Ovary (tissue), 10 donors: ENCODE measurements at regions of chr10 and their contacts with region 1.

Region 1: GRCh38 chr10:86710987-86711512 is 42.7 kb downstream of the LDB3 start:
- DNase-seq: peak; percentile 89 to 94 (median 92)
- H3K4me3 ChIP-seq: peak overlapping the region; percentile 85
- H3K27ac ChIP-seq: peak overlapping the region; percentile 88 to 94
- H3K4me1 ChIP-seq: peaks cover 5% of the 10 kb centered on the region
- H3K27me3 ChIP-seq: no peaks in the 10 kb centered on the region
- CTCF ChIP-seq: peak; percentile 84 to 97 (median 95)
- EP300 ChIP-seq: no peak
- POLR2A ChIP-seq: peak; percentile 75

Region 2: GRCh38 chr10:86755740-86756510 is 44.9 kb after region 1 on chr10:
- intact Hi-C with region 1: loop called in 2 of 4 experiments (anchors 2 to 5 kb)
- DNase-seq: peak; percentile 71 to 97 (median 92)
- H3K4me3 ChIP-seq: peak overlapping the region; percentile 74
- H3K27ac ChIP-seq: peak overlapping the region; percentile 84 to 96
- H3K4me1 ChIP-seq: peaks cover 2% of the 10 kb centered on the region
- H3K27me3 ChIP-seq: no peaks in the 10 kb centered on the region
- CTCF ChIP-seq: peak in 2 of 3 donors; percentile 10 to 17
- EP300 ChIP-seq: no peak
- POLR2A ChIP-seq: peak; percentile 77

Region 3: GRCh38 chr10:86899670-86900276 is 188.7 kb after region 1 on chr10:
- intact Hi-C with region 1: loop called in 3 of 4 experiments (anchors 5 kb)
- DNase-seq: peak; percentile 45 to 79 (median 57)
- H3K4me3 ChIP-seq: no peak overlapping the region
- H3K27ac ChIP-seq: no peak overlapping the region
- H3K4me1 ChIP-seq: peaks cover 6% of the 10 kb centered on the region
- H3K27me3 ChIP-seq: no peaks in the 10 kb centered on the region
- CTCF ChIP-seq: peak; percentile 35 to 82 (median 81)
- EP300 ChIP-seq: no peak
- POLR2A ChIP-seq: no peak

Region 4: DNA sequence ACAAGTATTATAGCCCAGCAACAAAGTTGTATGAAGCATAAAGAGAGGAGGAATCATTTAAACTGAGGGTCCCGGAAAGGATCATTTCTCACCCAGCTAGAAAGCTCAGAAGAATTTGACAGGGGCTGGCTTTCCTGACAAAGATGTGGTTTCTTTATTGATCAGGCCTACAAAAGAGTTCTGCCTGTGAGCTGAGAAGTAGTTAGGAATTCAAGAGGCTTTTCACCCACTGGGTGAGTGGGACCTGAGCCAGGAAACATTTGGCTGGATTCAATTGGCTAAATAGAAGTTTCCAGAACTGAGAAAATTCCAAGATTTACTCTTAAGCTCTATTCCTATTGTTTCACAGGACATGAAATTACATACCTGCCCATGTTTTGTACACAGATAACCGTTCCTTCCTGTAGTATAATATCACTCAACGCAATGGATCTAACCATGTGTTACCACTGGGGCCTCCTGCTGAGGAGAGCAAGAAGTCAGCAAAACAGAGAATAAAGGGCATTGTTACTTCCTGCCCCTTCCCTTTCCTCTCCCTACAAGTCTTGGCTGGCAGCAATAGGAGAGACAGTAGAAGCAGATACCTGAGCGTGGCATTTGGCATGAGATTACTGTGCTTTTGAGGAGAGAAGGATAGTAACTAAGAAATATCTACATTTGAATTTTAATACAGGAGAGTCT is 894.7 kb after region 1 on chr10:
- intact Hi-C with region 1: no loop called
- DNase-seq: no peak
- H3K4me3 ChIP-seq: no peak overlapping the region
- H3K27ac ChIP-seq: no peak overlapping the region
- H3K4me1 ChIP-seq: no peaks in the 10 kb centered on the region
- H3K27me3 ChIP-seq: no peaks in the 10 kb centered on the region
- CTCF ChIP-seq: no peak
- EP300 ChIP-seq: no peak
- POLR2A ChIP-seq: no peak